ENCODE measurements at regions of chr20 and their contacts with region 1.

Region 1: GRCh38 chr20:5215672-5216304 is 89.0 kb downstream of the CDS2 start:
- DNase-seq: no peak
- H3K4me3 ChIP-seq: no peak overlapping the region
- H3K4me3 Mint-ChIP-seq: no peak overlapping the region
- H3K27ac ChIP-seq: no peak overlapping the region
- H3K27ac Mint-ChIP-seq: peak overlapping the region in 1 of 7 donors; percentile 33
- H3K4me1 ChIP-seq: no peaks in the 10 kb centered on the region
- H3K4me1 Mint-ChIP-seq: no peaks in the 10 kb centered on the region
- H3K27me3 ChIP-seq: no peaks in the 10 kb centered on the region
- H3K27me3 Mint-ChIP-seq: no peaks in the 10 kb centered on the region

Region 2: DNA sequence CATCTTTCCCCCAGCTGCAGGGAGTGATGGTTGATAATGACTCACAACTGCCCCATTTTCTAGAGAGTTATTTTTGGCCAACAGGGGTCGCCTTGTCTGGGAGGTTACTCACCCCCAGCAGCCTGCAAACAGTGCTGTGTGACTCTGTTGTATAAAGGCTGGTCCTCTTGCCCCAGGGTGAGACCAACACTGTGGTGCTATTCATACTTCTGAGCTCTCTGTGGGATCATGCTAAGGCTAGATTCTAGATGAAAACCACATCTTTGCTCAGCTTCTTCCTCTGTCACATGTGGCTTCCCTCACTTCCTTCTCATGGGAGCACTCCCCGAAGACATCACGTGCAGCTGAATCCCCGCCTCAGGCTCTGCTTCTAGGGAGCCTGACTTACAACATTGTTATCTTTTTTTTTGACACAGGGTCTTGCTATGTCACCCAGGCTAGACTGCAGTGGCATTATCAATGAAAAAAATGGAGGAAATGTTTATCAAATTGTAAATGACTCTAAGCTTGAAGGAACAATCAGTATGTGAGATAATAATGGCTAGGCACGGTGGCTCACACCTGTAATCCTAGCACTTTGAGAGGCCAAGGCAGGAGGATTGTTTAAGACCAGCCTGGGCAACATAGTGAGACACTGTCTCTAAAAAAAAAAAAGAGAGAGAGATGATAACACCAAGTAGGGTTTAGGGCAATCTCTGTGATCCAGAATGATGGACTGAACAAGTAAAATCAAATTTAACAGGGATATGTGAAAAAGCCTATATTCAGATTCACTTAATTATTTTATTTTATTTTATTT is 158.8 kb before region 1 on chr20:
- CTCF ChIA-PET with region 1: no interaction called
- POLR2A ChIA-PET with region 1: no interaction called
- intact Hi-C with region 1: no loop called
- DNase-seq: peak; percentile 69 to 78 (median 73)
- H3K4me3 ChIP-seq: no peak overlapping the region
- H3K4me3 Mint-ChIP-seq: peak overlapping the region in 7 of 8 donors; percentile 6 to 69 (median 46)
- H3K27ac ChIP-seq: no peak overlapping the region
- H3K27ac Mint-ChIP-seq: peak overlapping the region; percentile 48 to 96 (median 81)
- H3K4me1 ChIP-seq: peaks cover 19% of the 10 kb centered on the region
- H3K4me1 Mint-ChIP-seq: peaks cover 13 to 24% (median 20%) of the 10 kb centered on the region in 4 donors
- H3K27me3 ChIP-seq: no peaks in the 10 kb centered on the region
- H3K27me3 Mint-ChIP-seq: no peaks in the 10 kb centered on the region

Region 3: DNA sequence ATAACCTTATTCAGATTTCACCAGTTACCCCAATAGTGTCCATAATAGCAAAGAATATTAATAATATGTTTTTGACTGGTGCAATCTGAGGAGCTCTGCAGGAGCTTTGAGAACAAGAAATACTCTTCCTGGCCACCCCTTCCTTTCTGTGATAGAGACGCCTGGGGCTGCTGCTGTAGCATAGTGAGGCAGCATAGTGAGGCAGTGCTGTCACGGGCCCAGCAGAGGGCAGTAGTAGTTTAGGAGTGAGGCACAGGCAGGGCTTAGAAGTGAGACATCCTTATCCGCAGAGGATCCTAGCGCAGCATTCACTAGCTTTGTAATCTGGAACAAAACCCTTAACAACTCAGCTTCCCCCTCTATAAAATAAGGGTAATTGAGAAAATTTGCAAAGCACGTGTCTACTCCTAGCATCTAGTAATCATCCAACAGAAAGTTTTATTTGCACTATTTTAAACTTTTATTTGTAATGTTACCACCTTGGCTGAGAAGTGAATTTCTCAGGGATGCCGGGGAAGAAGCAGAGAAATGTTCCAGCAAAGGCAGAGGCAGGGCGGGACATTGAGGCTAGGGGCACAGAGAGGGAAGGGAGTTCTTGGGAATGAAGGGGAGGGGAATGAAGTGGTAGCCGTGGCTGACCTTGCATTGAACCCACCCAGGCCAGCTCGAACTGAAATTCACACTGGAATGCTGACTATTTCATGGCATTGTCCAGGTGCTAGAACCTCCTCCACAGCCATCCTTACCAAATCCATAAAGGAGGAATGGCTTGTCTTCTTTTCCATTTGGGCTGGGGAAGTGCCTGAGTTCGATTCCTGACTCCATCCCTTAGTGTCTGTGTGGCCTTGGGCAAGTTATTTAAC is 10.2 kb before region 1 on chr20:
- CTCF ChIA-PET with region 1: interaction called, 38 read pairs
- POLR2A ChIA-PET with region 1: no interaction called
- intact Hi-C with region 1: no loop called
- DNase-seq: peak; percentile 49 to 64 (median 56)
- H3K4me3 ChIP-seq: no peak overlapping the region
- H3K4me3 Mint-ChIP-seq: no peak overlapping the region
- H3K27ac ChIP-seq: no peak overlapping the region
- H3K27ac Mint-ChIP-seq: peak overlapping the region in 1 of 7 donors; percentile 74
- H3K4me1 ChIP-seq: no peaks in the 10 kb centered on the region
- H3K4me1 Mint-ChIP-seq: peaks cover 0 to 6% (median 0%) of the 10 kb centered on the region in 4 donors
- H3K27me3 ChIP-seq: no peaks in the 10 kb centered on the region
- H3K27me3 Mint-ChIP-seq: no peaks in the 10 kb centered on the region

Measured in CD4-positive, alpha-beta memory T cell (primary cell).